ENCODE measurements at regions of chr3 and their contacts with region 1.

Region 1: GRCh38 chr3:120450600-120451271 is at the start of gene FSTL1:
- DNase-seq: peak; percentile 67
- H3K4me3 ChIP-seq: peak within 1 kb of the TSS; percentile 70 to 95 (median 92)
- H3K27ac ChIP-seq: peak within 1 kb of the TSS; percentile 89
- H3K4me1 ChIP-seq: peaks cover 22% of the 10 kb centered on the region
- H3K27me3 ChIP-seq: no peaks in the 10 kb centered on the region
- CTCF ChIP-seq: no peak
- POLR2A ChIP-seq: peak; percentile 95
- total RNA-seq, gene FSTL1: 522 and 562 TPM in 2 replicates

Region 2: GRCh38 chr3:120438665-120439370 is 11.9 kb before region 1 on chr3:
- CTCF ChIA-PET with region 1: interaction called, 8 read pairs
- POLR2A ChIA-PET with region 1: interaction called, 10 read pairs
- dilution Hi-C with region 1: no loop called
- intact Hi-C with region 1: loop called (anchors 1 kb)
- DNase-seq: peak; percentile 95
- H3K4me3 ChIP-seq: no peak overlapping the region
- H3K27ac ChIP-seq: peak overlapping the region; percentile 91
- H3K4me1 ChIP-seq: peaks cover 66% of the 10 kb centered on the region
- H3K27me3 ChIP-seq: no peaks in the 10 kb centered on the region
- CTCF ChIP-seq: no peak
- POLR2A ChIP-seq: no peak

Region 3: DNA sequence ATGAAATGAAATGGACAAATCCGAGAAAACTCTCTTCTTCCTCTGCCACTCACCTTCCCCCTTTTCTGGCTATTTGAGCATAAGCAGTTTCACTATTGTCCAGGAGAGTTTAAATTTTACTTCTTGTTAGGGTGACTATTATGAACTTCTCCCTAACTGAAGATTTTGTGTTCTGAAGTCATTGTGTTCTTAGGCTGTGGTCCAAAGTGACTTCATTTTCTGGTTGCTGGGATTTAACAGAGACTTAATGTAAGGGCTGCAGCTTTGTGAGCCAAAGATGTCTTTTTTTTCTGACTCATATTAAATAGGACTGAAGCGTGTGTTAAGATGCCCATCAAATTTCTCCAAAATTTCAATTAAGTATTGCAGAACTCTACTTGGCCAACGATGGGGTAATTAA is 46.6 kb after region 1 on chr3:
- CTCF ChIA-PET with region 1: interaction called, 3 read pairs
- POLR2A ChIA-PET with region 1: interaction called, 3 read pairs
- dilution Hi-C with region 1: no loop called
- intact Hi-C with region 1: loop called (anchors 1 kb)
- DNase-seq: peak; percentile 93
- H3K4me3 ChIP-seq: no peak overlapping the region
- H3K27ac ChIP-seq: peak overlapping the region; percentile 66
- H3K4me1 ChIP-seq: peaks cover 29% of the 10 kb centered on the region
- H3K27me3 ChIP-seq: no peaks in the 10 kb centered on the region
- CTCF ChIP-seq: no peak
- POLR2A ChIP-seq: no peak

Measured in endothelial cell of umbilical vein (primary cell).